Heart right ventricle (tissue), 16 donors: ENCODE measurements at regions of chr11 and their contacts with region 1.

Region 1: GRCh38 chr11:21736404-21736803 is 456.5 kb upstream of the ANO5 start:
- DNase-seq: no peak
- ATAC-seq: no peak
- H3K4me3 ChIP-seq: no peak overlapping the region
- H3K27ac ChIP-seq: no peak overlapping the region
- H3K4me1 ChIP-seq: no peaks in the 10 kb centered on the region
- H3K27me3 ChIP-seq: no peaks in the 10 kb centered on the region
- CTCF ChIP-seq: no peak

Region 2: DNA sequence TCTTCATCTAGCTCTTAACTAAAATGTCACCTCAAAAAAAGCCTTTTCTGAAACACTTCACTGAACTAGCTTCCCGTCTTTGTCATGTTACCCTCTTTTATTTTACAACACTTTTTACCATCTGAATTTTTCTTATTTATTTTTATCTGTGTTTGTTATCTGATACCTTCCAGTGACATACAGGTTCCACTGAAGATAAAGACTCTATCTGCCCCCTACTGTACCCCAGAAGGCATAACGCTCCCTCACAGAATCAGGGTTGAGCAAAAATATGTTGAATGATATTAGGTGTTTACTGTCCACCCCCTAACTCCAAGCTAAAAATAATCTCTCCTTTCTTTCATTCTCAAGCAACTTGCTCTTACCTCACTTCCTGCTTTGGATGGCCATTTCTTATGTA is 412.8 kb before region 1 on chr11:
- intact Hi-C with region 1: no loop called
- DNase-seq: no peak
- ATAC-seq: no peak
- H3K4me3 ChIP-seq: no peak overlapping the region
- H3K27ac ChIP-seq: no peak overlapping the region
- H3K4me1 ChIP-seq: peaks cover 0 to 4% (median 0%) of the 10 kb centered on the region in 9 donors
- H3K27me3 ChIP-seq: no peaks in the 10 kb centered on the region
- CTCF ChIP-seq: no peak

Region 3: GRCh38 chr11:21806947-21807346 is 70.5 kb after region 1 on chr11:
- intact Hi-C with region 1: loop called in 1 of 10 experiments (anchors 10 kb)
- DNase-seq: no peak
- ATAC-seq: no peak
- H3K4me3 ChIP-seq: no peak overlapping the region
- H3K27ac ChIP-seq: no peak overlapping the region
- H3K4me1 ChIP-seq: no peaks in the 10 kb centered on the region
- H3K27me3 ChIP-seq: no peaks in the 10 kb centered on the region
- CTCF ChIP-seq: no peak